ENCODE measurements at regions of chr1 and their contacts with region 1.

Region 1: DNA sequence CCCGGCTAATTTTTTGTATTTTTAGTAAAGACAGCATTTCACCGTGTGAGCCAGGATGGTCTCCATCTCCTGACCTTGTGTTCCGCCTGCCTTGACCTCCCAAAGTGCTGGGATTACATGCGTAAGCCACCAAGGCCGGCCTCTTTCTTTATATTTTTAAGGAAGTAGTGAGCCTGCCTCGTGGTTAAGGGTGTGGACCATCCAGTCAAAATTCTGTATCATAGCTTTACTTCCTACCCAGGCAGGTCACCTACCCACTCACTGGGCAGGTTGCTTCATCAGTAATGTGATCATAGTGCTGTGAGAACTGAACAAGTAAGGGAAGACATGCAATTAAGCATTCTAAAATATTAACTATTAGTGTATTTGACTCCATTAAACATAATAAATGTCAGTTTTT is 8.1 kb upstream of the ACOT7 start:
- DNase-seq: peak in 2 of 3 donors; percentile 51 to 59
- H3K4me3 ChIP-seq: no peak overlapping the region
- H3K27ac ChIP-seq: no peak overlapping the region
- H3K4me1 ChIP-seq: no peaks in the 10 kb centered on the region
- H3K27me3 ChIP-seq: peaks cover 0 to 9% (median 3%) of the 10 kb centered on the region in 5 experiments

Region 2: DNA sequence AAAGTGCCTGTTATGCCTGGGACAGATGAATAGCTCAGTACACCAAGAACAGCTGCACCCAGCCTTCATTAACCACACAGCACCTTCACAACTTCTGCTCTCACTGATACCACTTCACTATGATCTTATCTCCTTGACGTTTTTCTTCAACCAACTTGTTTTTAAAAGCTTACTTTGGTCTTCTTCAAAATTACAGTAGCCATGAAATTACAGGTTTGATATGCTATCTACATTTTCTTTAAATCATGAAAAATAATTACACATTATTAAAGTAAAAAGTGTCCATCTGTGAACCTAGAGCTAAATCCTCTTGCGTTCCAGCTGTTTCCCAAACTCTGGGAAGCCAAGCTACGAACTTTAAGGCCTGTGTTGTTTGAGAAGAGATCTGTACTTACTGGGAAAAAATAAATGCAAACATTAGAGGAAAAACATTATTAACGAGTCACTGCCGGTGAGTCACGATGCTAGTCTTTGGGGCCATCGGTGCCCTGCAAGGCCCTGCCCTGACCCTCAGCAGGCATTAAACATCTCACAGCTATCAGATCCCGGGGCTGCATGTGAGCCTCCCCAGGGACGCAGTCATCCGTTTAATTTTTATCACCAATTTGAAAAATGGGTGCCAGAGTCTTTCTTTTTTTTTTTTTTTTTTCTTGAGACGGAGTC is 84.4 kb before region 1 on chr1:
- CTCF ChIA-PET with region 1: no interaction called
- POLR2A ChIA-PET with region 1: no interaction called
- DNase-seq: peak in 2 of 3 donors; percentile 40 to 64
- H3K4me3 ChIP-seq: no peak overlapping the region
- H3K27ac ChIP-seq: peak overlapping the region in 1 of 2 experiments; percentile 45
- H3K4me1 ChIP-seq: peaks cover 0 to 5% (median 0%) of the 10 kb centered on the region in 4 experiments
- H3K27me3 ChIP-seq: no peaks in the 10 kb centered on the region

Region 3: GRCh38 chr1:6343506-6344405 is 57.9 kb before region 1 on chr1:
- CTCF ChIA-PET with region 1: interaction called, 72 read pairs
- POLR2A ChIA-PET with region 1: interaction called, 3 read pairs
- DNase-seq: peak; percentile 59 to 80 (median 75)
- H3K4me3 ChIP-seq: no peak overlapping the region
- H3K27ac ChIP-seq: no peak overlapping the region
- H3K4me1 ChIP-seq: peaks cover 0 to 11% (median 9%) of the 10 kb centered on the region in 4 experiments
- H3K27me3 ChIP-seq: no peaks in the 10 kb centered on the region

Region 4: GRCh38 chr1:6414443-6414844 is 12.8 kb after region 1 on chr1:
- CTCF ChIA-PET with region 1: interaction called, 81 read pairs
- POLR2A ChIA-PET with region 1: no interaction called
- DNase-seq: peak; percentile 62 to 72 (median 71)
- H3K4me3 ChIP-seq: peak overlapping the region in 2 of 7 experiments; percentile 4 to 33
- H3K27ac ChIP-seq: no peak overlapping the region
- H3K4me1 ChIP-seq: peaks cover 0 to 13% (median 7%) of the 10 kb centered on the region in 4 experiments
- H3K27me3 ChIP-seq: peaks cover 0 to 58% (median 28%) of the 10 kb centered on the region in 5 experiments

Region 5: GRCh38 chr1:6445062-6445763 is 43.5 kb after region 1 on chr1:
- CTCF ChIA-PET with region 1: no interaction called
- POLR2A ChIA-PET with region 1: no interaction called
- DNase-seq: peak in 1 of 3 donors; percentile 50
- H3K4me3 ChIP-seq: no peak overlapping the region
- H3K27ac ChIP-seq: no peak overlapping the region
- H3K4me1 ChIP-seq: peaks cover 0 to 30% (median 12%) of the 10 kb centered on the region in 4 experiments
- H3K27me3 ChIP-seq: peaks cover 0 to 68% (median 30%) of the 10 kb centered on the region in 5 experiments

Region 6: DNA sequence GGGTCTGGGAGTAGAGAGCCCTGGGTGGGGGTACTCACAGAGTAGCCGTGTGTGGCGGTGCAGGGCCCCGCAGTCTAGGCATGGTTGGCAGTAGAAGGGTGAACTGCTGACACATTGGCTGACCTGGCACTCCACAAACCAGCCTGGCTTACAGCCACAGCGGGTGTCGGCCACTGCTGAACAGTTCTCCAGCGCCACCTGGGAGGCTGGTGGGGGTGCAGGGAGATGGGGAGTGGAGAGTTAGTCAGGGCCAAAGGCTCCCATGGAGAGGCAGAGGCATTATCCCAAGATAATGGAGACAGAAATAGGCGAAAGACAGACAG is 62.8 kb after region 1 on chr1:
- CTCF ChIA-PET with region 1: no interaction called
- POLR2A ChIA-PET with region 1: no interaction called
- DNase-seq: no peak
- H3K4me3 ChIP-seq: no peak overlapping the region
- H3K27ac ChIP-seq: no peak overlapping the region
- H3K4me1 ChIP-seq: peaks cover 0 to 31% (median 28%) of the 10 kb centered on the region in 4 experiments
- H3K27me3 ChIP-seq: peaks cover 0 to 47% (median 4%) of the 10 kb centered on the region in 5 experiments

Region 7: GRCh38 chr1:6554031-6554906 is 152.6 kb after region 1 on chr1 and contains the start of gene NOL9:
- CTCF ChIA-PET with region 1: no interaction called
- POLR2A ChIA-PET with region 1: no interaction called
- DNase-seq: peak; percentile 93 to 96 (median 95)
- H3K4me3 ChIP-seq: peak within 1 kb of the TSS; percentile 76 to 95 (median 93)
- H3K27ac ChIP-seq: peak within 1 kb of the TSS; percentile 75 to 92
- H3K4me1 ChIP-seq: peaks cover 5 to 19% (median 15%) of the 10 kb centered on the region in 4 experiments
- H3K27me3 ChIP-seq: no peaks in the 10 kb centered on the region